WTC11 (cell line): ENCODE measurements at regions of chr17 and their contacts with region 1.

Region 1: GRCh38 chr17:15157051-15157450 is 108.1 kb downstream of the PMP22 start:
- DNase-seq: no peak
- ATAC-seq: no peak
- H3K4me3 Mint-ChIP-seq: no peak overlapping the region
- H3K27ac Mint-ChIP-seq: no peak overlapping the region
- H3K4me1 Mint-ChIP-seq: peaks cover 4% of the 10 kb centered on the region
- H3K27me3 Mint-ChIP-seq: no peaks in the 10 kb centered on the region; the same call in 1 of the 2 replicates
- CTCF ChIP-seq: no peak

Region 2: GRCh38 chr17:14886240-14886639 is 270.8 kb before region 1 on chr17:
- CTCF ChIA-PET with region 1: interaction called, 20 read pairs
- POLR2A ChIA-PET with region 1: no interaction called
- DNase-seq: no peak
- ATAC-seq: peak; percentile 91
- H3K4me3 Mint-ChIP-seq: no peak overlapping the region
- H3K27ac Mint-ChIP-seq: no peak overlapping the region
- H3K4me1 Mint-ChIP-seq: no peaks in the 10 kb centered on the region
- H3K27me3 Mint-ChIP-seq: peaks cover 3% of the 10 kb centered on the region; the same call in 1 of the 2 replicates
- CTCF ChIP-seq: no peak

Region 3: DNA sequence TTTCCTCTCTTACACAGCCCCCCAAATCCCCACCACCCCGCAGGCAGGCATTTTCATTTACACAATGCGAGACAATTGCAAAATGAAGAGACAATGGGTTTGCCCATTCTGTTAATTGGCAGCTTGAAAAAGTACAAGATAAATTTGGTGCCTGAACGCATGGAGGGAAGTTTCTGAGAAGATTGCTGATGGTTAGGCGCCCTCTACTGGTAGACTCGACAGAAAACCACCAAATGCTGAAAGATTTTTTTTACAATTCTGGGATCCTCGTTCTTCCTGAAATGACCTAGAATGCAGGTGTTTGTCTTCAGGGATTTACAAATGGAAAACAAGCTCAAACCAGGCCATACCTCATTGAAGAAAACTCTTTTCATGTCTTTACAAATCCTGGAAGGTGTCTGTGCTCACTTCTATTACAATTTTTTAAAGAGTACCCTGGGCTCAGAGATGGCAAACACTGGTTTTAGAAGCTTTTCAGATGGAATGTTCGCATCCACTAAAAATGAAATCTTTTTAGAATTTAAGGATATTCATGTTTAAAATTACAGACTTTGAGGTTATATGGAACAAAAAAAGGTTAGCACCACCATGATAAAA is 230.4 kb before region 1 on chr17:
- CTCF ChIA-PET with region 1: interaction called, 24 read pairs
- POLR2A ChIA-PET with region 1: no interaction called
- DNase-seq: peak; percentile 45
- ATAC-seq: no peak
- H3K4me3 Mint-ChIP-seq: no peak overlapping the region
- H3K27ac Mint-ChIP-seq: no peak overlapping the region
- H3K4me1 Mint-ChIP-seq: 0 out of 2 replicates have a peak, but pooled peaks cover 4% of the 10 kb centered on the region
- H3K27me3 Mint-ChIP-seq: no peaks in the 10 kb centered on the region
- CTCF ChIP-seq: peak; percentile 76

Region 4: DNA sequence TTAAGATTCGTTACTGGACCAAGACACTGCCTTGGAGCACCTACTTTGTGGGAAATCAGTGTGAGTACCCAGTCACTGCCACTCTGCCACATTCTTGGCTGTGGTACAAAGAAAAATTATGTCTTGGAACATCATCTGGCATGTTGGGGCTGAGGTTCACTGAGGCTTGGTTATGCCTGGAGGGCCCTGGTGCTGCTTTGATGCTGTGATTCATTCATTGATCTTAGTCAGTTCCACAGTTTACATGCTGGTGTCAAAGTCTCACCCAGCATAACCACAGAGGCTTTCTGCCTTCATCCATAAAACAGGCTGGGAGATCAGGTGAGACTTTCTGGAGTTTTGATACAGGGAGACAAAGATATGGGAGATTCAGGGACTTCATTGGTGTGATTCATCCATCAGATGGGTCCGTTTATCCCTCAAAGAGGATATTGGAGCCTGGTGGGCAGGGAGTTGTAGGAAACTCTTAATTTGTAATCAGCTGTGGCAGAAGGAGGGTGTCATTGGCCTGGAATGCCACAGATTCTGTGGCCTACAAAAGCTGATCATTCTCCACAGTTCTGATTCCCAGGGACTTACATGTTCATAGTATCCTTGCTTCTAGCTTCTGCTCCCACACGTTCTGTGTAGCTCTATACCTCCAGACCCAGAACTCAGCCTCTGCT is 214.4 kb before region 1 on chr17:
- CTCF ChIA-PET with region 1: interaction called, 10 read pairs
- POLR2A ChIA-PET with region 1: no interaction called
- DNase-seq: no peak
- ATAC-seq: no peak
- H3K4me3 Mint-ChIP-seq: no peak overlapping the region
- H3K27ac Mint-ChIP-seq: no peak overlapping the region
- H3K4me1 Mint-ChIP-seq: no peaks in the 10 kb centered on the region
- H3K27me3 Mint-ChIP-seq: no peaks in the 10 kb centered on the region
- CTCF ChIP-seq: no peak

Region 5: DNA sequence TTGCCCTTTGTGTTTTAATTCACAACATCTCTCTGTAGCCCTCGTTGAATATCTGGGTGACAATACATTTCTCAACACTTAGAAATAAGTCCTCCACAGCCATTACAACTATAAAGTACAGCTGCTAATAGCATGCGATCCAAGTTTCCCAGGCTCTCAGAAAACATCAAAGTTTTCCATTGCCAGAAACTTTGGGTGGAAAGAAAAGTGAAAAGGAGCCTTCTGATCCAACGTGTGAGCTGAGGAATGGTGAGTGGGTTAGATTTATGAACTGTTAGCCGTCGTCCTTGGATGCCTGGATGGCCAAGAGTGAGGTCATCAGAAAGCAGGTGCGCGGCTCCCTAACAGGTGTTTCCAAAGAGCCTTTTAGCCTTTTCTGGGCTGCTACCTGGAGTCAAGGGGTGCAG is 149.9 kb before region 1 on chr17:
- CTCF ChIA-PET with region 1: no interaction called
- POLR2A ChIA-PET with region 1: no interaction called
- DNase-seq: no peak
- ATAC-seq: no peak
- H3K4me3 Mint-ChIP-seq: no peak overlapping the region
- H3K27ac Mint-ChIP-seq: no peak overlapping the region
- H3K4me1 Mint-ChIP-seq: peaks cover 14% of the 10 kb centered on the region
- H3K27me3 Mint-ChIP-seq: no peaks in the 10 kb centered on the region
- CTCF ChIP-seq: no peak

Region 6: GRCh38 chr17:15048381-15048780 is 108.7 kb before region 1 on chr17:
- CTCF ChIA-PET with region 1: interaction called, 31 read pairs
- POLR2A ChIA-PET with region 1: no interaction called
- DNase-seq: no peak
- ATAC-seq: peak; percentile 87
- H3K4me3 Mint-ChIP-seq: peak overlapping the region; percentile 2; the same call in 1 of the 2 replicates
- H3K27ac Mint-ChIP-seq: peak overlapping the region; percentile 33
- H3K4me1 Mint-ChIP-seq: peaks cover 37% of the 10 kb centered on the region
- H3K27me3 Mint-ChIP-seq: no peaks in the 10 kb centered on the region
- CTCF ChIP-seq: no peak

Region 7: GRCh38 chr17:15138880-15139279 is 18.2 kb before region 1 on chr17:
- CTCF ChIA-PET with region 1: interaction called, 27 read pairs
- POLR2A ChIA-PET with region 1: no interaction called
- DNase-seq: no peak
- ATAC-seq: no peak
- H3K4me3 Mint-ChIP-seq: no peak overlapping the region
- H3K27ac Mint-ChIP-seq: no peak overlapping the region
- H3K4me1 Mint-ChIP-seq: peaks cover 4% of the 10 kb centered on the region; the same call in 1 of the 2 replicates
- H3K27me3 Mint-ChIP-seq: peaks cover 2% of the 10 kb centered on the region; the same call in 1 of the 2 replicates
- CTCF ChIP-seq: no peak

Region 8: GRCh38 chr17:15171167-15172047 is 14.4 kb after region 1 on chr17:
- CTCF ChIA-PET with region 1: interaction called, 31 read pairs
- POLR2A ChIA-PET with region 1: no interaction called
- DNase-seq: peak; percentile 83
- ATAC-seq: peak; percentile 99
- H3K4me3 Mint-ChIP-seq: no peak overlapping the region
- H3K27ac Mint-ChIP-seq: no peak overlapping the region
- H3K4me1 Mint-ChIP-seq: peaks cover 29% of the 10 kb centered on the region
- H3K27me3 Mint-ChIP-seq: peaks cover 5% of the 10 kb centered on the region
- CTCF ChIP-seq: peak; percentile 82